HepG2 (cell line): ENCODE measurements at regions of chr2 and their contacts with region 1.

Region 1: DNA sequence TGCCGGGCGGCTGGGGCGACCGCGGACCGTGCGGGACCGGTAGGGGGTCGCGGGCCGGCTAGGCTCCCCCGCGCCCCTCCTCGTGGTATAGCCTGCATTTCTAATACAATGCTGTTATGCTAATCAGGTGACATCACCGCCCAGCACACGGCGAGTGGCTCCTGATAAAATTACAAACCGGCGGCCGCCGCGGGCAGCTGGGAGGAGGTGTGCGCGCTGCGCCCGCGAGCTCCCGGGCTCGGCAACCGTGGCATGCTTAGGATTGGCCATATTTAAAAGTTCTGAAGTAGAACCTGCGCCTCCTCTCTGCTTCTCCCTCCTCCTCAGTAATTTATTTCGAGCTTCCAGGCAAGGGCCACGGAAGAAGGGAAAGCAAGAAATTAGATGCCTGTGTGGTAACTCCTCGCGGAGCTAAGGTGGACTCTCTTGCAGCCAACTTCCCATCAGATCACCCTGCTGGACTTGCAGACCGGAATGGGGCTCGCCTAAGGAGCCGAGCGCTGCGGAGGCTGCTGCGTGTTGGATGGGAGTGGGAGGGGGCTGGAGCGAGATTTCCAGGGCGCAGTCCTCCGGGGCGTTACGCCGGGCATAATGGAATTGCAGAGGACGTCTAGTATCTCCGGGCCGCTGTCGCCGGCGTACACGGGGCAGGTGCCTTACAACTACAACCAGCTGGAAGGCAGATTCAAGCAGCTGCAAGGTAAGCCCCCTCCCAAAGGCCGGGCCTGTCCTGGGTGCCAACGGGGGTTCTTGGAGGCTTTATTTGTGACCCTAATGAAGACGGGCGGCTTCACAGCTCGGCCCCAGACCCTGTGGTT is 102.3 kb downstream of the SPTBN1 start:
- DNase-seq: peak; percentile 78
- ATAC-seq: peak; percentile 72
- H3K4me3 ChIP-seq: peak overlapping the region; percentile 86 to 99 (median 91)
- H3K27ac ChIP-seq: peak overlapping the region; percentile 93
- H3K4me1 ChIP-seq: peaks cover 67% of the 10 kb centered on the region
- H3K27me3 ChIP-seq: no peaks in the 10 kb centered on the region; a peak in 1 of 5 replicates
- CTCF ChIP-seq: peak; percentile 21; the same call in 1 of the 2 replicates
- EP300 ChIP-seq: no peak
- POLR2A ChIP-seq: peak; percentile 17 to 76; a peak in 3 of 4 replicates
- RAD21 ChIP-seq: no peak

Region 2: GRCh38 chr2:54531558-54531957 is 26.8 kb before region 1 on chr2:
- CTCF ChIA-PET with region 1: no interaction called
- POLR2A ChIA-PET with region 1: interaction called, 49 read pairs
- in situ Hi-C with region 1: no loop called
- intact Hi-C with region 1: loop called (anchors 2 kb)
- DNase-seq: no peak
- ATAC-seq: no peak
- H3K4me3 ChIP-seq: no peak overlapping the region
- H3K27ac ChIP-seq: peak overlapping the region; percentile 39
- H3K4me1 ChIP-seq: peaks cover 60% of the 10 kb centered on the region
- H3K27me3 ChIP-seq: no peaks in the 10 kb centered on the region
- CTCF ChIP-seq: no peak
- EP300 ChIP-seq: no peak
- POLR2A ChIP-seq: no peak
- RAD21 ChIP-seq: no peak

Region 3: DNA sequence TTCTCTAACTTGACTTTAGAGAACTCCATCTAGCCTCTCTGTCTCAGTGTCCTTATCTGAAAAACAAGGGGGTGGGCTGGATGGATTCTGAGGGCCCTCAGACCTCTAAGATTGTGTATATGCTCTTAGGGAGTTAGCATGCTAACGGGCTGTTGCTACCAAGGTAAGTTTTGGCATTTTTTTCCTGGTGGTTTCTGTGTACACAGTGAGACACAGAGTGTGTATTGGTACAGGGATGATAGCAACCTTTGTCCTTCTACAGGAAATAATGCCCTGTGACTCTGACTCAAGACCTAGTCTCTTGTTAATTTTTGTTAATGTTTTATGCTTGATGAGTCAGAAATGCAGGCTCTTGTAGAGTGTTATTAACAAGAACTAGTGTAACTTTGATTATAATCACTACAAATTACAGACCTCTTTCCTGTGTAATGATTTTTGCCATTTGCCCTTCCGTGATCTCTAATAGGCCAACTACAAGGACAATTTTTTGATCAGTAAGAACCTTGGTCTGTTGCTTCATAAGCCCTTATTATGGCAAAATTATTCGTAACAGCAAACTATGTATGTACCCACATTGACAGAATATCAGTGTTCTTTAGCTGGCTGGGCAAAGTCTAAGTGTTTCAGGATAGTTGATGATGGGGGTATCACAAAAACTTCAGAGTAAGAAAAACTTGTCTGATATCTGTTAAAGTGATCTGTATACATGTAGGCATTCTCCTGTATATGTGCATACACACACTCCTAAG is 12.5 kb before region 1 on chr2:
- CTCF ChIA-PET with region 1: no interaction called
- POLR2A ChIA-PET with region 1: interaction called, 25 read pairs
- in situ Hi-C with region 1: no loop called
- intact Hi-C with region 1: loop called (anchors 1 kb)
- DNase-seq: peak; percentile 97
- ATAC-seq: peak; percentile 99
- H3K4me3 ChIP-seq: peak overlapping the region in 2 of 3 experiments; percentile 9 to 19; a peak in 3 of 6 replicates
- H3K27ac ChIP-seq: peak overlapping the region; percentile 80
- H3K4me1 ChIP-seq: peaks cover 72% of the 10 kb centered on the region
- H3K27me3 ChIP-seq: no peaks in the 10 kb centered on the region
- CTCF ChIP-seq: 0 out of 2 replicates have a peak, but pooled peaks have one; percentile 1
- EP300 ChIP-seq: peak; percentile 92 to 95
- POLR2A ChIP-seq: peak in 1 of 2 experiments; percentile 35; a peak in 1 of 4 replicates
- RAD21 ChIP-seq: no peak

Region 4: DNA sequence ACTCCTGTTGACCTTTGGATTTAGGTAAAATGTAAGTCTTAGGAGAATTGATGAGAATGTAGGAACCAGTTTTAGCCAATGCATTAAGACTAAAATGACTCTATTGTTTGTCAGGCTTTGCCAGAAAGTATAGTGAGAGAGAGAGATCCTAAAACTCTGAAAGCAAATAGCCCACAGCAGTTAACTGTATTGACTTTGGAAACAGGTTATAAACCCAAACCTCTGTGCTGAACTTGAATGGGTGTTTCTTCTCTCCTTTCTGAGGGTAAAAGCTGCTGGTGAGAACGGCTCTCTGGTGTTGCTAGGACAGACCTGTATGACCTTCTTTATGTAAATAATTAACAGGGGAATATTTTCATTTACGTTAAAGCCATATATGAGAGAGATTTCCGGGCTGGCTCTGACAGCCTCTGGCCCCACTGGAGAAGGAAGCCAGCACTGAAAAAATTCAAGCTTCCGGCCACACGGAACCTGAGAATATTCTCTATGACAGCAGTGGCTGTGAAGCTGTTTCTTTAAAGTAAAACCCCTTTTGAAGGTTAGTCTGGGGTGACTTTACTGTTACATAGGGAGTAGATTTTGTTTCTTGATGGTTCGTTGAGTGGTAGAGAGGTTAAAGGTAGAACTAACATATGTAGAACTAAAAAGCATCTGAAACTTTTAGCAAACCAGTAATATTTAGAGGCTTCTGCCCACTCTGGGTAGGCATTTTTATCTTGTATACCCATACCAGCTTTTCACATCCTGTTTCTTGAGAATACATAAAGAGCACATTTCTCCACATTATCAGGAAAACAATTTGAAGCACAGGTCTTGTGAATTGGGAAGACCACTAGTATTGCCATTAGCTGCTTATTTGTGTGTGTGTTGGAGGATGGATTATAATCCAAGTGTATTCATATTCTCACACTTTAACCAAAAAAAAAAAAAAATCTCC is 21.6 kb after region 1 on chr2:
- CTCF ChIA-PET with region 1: no interaction called
- POLR2A ChIA-PET with region 1: interaction called, 108 read pairs
- in situ Hi-C with region 1: no loop called
- intact Hi-C with region 1: no loop called
- DNase-seq: peak; percentile 97
- ATAC-seq: peak; percentile 89
- H3K4me3 ChIP-seq: peak overlapping the region; percentile 27 to 51 (median 40); a peak in 4 of 6 replicates
- H3K27ac ChIP-seq: peak overlapping the region; percentile 80
- H3K4me1 ChIP-seq: peaks cover 100% of the 10 kb centered on the region
- H3K27me3 ChIP-seq: no peaks in the 10 kb centered on the region
- CTCF ChIP-seq: no peak
- EP300 ChIP-seq: peak in 1 of 2 experiments; percentile 84; a peak in 2 of 4 replicates
- POLR2A ChIP-seq: peak in 1 of 2 experiments; percentile 53; a peak in 1 of 4 replicates
- RAD21 ChIP-seq: no peak

Region 5: GRCh38 chr2:54618646-54619565 is 60.5 kb after region 1 on chr2:
- CTCF ChIA-PET with region 1: no interaction called
- POLR2A ChIA-PET with region 1: interaction called, 21 read pairs
- in situ Hi-C with region 1: no loop called
- intact Hi-C with region 1: loop called (anchors 5 kb)
- DNase-seq: peak; percentile 77
- ATAC-seq: peak; percentile 79
- H3K4me3 ChIP-seq: peak overlapping the region in 1 of 3 experiments; percentile 10; a peak in 1 of 6 replicates
- H3K27ac ChIP-seq: peak overlapping the region; percentile 81
- H3K4me1 ChIP-seq: peaks cover 64% of the 10 kb centered on the region
- H3K27me3 ChIP-seq: no peaks in the 10 kb centered on the region
- CTCF ChIP-seq: no peak
- EP300 ChIP-seq: peak in 1 of 2 experiments; percentile 89; a peak in 2 of 4 replicates
- POLR2A ChIP-seq: no peak
- RAD21 ChIP-seq: no peak; the same call in 1 of the 2 replicates

Region 6: DNA sequence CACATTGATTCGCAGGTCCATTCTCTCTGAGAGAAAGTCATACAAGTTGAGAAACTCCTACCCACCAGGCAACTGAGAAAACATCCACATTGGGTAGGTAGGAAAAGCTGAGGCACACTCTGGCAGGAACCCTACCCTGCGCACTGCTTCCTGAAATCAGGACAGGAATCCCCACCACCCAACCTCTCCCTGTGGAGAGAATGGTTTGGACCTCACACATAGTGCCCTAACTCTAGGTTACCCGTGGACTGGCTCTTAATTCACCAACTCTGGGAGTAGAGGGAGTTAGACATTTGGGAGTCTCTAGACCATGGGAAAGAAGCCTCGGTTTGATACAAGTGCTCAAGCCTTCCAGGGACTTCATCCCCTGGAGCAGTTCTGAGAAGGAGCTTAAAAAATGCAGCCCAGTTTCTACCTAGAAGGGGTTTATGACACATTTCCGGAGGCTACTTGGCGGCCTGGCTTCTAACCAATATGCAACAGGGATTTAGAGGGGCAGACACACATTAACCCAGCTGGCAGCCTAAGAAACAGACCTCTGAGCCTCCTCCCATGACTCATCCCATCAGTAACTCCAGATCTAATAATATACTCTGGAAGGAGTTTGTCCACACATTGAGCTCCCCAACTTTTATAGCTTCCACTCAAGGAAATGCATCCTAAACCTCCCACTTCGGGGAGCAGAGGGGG is 301.7 kb after region 1 on chr2:
- CTCF ChIA-PET with region 1: no interaction called
- POLR2A ChIA-PET with region 1: no interaction called
- in situ Hi-C with region 1: no loop called
- intact Hi-C with region 1: no loop called
- DNase-seq: no peak
- ATAC-seq: no peak
- H3K4me3 ChIP-seq: no peak overlapping the region
- H3K27ac ChIP-seq: no peak overlapping the region
- H3K4me1 ChIP-seq: peaks cover 37% of the 10 kb centered on the region
- H3K27me3 ChIP-seq: no peaks in the 10 kb centered on the region
- CTCF ChIP-seq: no peak
- EP300 ChIP-seq: no peak
- POLR2A ChIP-seq: no peak
- RAD21 ChIP-seq: no peak